ENCODE measurements at regions of chr4 and their contacts with region 1.

Region 1: GRCh38 chr4:118835571-118836300 is at the start of gene SEC24D:
- DNase-seq: peak; percentile 92 to 95
- ATAC-seq: peak; percentile 96 to 98 (median 98)
- H3K4me3 ChIP-seq: peak within 1 kb of the TSS; percentile 100
- H3K27ac ChIP-seq: peak within 1 kb of the TSS; percentile 93
- H3K4me1 ChIP-seq: peaks cover 9% of the 10 kb centered on the region
- H3K27me3 ChIP-seq: no peaks in the 10 kb centered on the region
- CTCF ChIP-seq: no peak
- total RNA-seq, gene SEC24D: 5.8 to 13.7 (median 6.3) TPM

Region 2: GRCh38 chr4:118761397-118762016 is 74.2 kb before region 1 on chr4:
- intact Hi-C with region 1: no loop called
- DNase-seq: no peak
- ATAC-seq: no peak
- H3K4me3 ChIP-seq: no peak overlapping the region
- H3K27ac ChIP-seq: no peak overlapping the region
- H3K4me1 ChIP-seq: peaks cover 35% of the 10 kb centered on the region
- H3K27me3 ChIP-seq: no peaks in the 10 kb centered on the region
- CTCF ChIP-seq: no peak

Region 3: GRCh38 chr4:118772081-118772766 is 63.5 kb before region 1 on chr4:
- intact Hi-C with region 1: loop called in 1 of 2 experiments (anchors 5 kb)
- DNase-seq: no peak
- ATAC-seq: peak; percentile 79 to 92 (median 84)
- H3K4me3 ChIP-seq: peak overlapping the region; percentile 23
- H3K27ac ChIP-seq: peak overlapping the region; percentile 17
- H3K4me1 ChIP-seq: peaks cover 16% of the 10 kb centered on the region
- H3K27me3 ChIP-seq: no peaks in the 10 kb centered on the region
- CTCF ChIP-seq: peak; percentile 70

Region 4: GRCh38 chr4:119212234-119212963 is 376.7 kb after region 1 on chr4 and contains the start of gene USP53:
- intact Hi-C with region 1: no loop called
- DNase-seq: peak; percentile 96 to 98
- ATAC-seq: peak; percentile 93 to 96 (median 96)
- H3K4me3 ChIP-seq: peak within 1 kb of the TSS; percentile 91
- H3K27ac ChIP-seq: peak within 1 kb of the TSS; percentile 99
- H3K4me1 ChIP-seq: peaks cover 23% of the 10 kb centered on the region
- H3K27me3 ChIP-seq: no peaks in the 10 kb centered on the region
- CTCF ChIP-seq: no peak
- total RNA-seq, gene USP53: 43.8 to 89.5 (median 57.3) TPM